ENCODE measurements at regions of chr5 and their contacts with region 1.

Region 1: GRCh38 chr5:180126726-180127681 is 55.4 kb upstream of the RNF130 start:
- DNase-seq: no peak
- ATAC-seq: peak; percentile 92
- H3K4me3 ChIP-seq: no peak overlapping the region
- H3K27ac ChIP-seq: no peak overlapping the region
- H3K4me1 ChIP-seq: peaks cover 0 to 9% of the 10 kb centered on the region in 2 experiments; a peak in 1 of 4 replicates
- H3K27me3 ChIP-seq: no peaks in the 10 kb centered on the region
- CTCF ChIP-seq: peak; percentile 81 to 84 (median 83)
- POLR2A ChIP-seq: no peak
- RAD21 ChIP-seq: peak; percentile 86

Region 2: DNA sequence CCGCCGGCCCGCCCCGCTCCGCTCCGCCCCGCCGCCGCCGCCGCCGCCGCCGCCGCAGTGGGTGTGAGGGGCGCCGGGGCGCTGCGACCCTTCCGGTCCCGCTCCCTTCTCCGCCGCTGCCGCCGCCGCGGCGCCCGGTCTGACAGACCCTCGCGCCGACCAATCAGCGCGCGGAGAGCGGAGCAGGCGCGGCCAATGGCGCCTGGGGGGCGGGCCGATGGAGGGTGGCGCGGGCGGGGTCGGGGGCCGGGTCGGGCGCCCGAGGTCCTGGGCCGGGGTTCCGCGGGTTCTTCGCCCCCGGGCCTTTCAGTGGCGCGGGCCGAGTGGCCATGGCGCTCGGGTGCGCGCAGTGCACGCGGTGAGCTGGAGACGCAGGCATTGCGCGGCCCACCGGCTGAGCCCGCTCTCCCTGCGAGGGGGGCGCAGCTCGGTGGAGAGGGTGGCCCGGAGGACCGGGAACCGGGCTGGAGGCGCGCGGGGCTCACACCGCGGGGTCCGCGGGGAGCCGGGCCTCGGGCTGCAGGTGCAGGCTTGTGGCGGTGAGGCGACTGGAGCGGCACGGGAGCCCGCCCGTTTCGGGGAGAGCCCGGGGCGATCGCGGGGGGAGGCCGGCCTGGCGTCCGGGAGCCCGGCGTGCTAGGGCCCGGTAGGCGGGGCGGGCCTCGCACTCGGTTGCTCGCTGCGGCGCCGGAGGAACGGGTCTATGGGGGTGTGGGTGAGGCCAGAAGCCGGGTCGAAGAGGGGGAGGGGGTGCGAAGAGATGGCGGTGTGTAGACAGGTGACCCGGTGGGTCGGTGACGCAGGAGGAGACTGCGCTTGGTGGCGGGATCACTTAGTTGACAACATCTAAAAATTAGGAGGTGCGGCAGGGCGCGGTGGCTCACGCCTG is 165.2 kb after region 1 on chr5 and contains the start of gene MAPK9:
- CTCF ChIA-PET with region 1: no interaction called
- POLR2A ChIA-PET with region 1: no interaction called
- RAD21 ChIA-PET with region 1: no interaction called
- intact Hi-C with region 1: loop called (anchors 10 kb)
- DNase-seq: peak; percentile 43
- ATAC-seq: peak; percentile 81
- H3K4me3 ChIP-seq: peak within 1 kb of the TSS; percentile 71 to 79
- H3K27ac ChIP-seq: peak within 1 kb of the TSS; percentile 93
- H3K4me1 ChIP-seq: peaks cover 10 to 24% of the 10 kb centered on the region in 2 experiments
- H3K27me3 ChIP-seq: no peaks in the 10 kb centered on the region
- CTCF ChIP-seq: no peak
- POLR2A ChIP-seq: peak; percentile 45
- RAD21 ChIP-seq: no peak
- total RNA-seq, gene MAPK9: 43.4 TPM

Region 3: DNA sequence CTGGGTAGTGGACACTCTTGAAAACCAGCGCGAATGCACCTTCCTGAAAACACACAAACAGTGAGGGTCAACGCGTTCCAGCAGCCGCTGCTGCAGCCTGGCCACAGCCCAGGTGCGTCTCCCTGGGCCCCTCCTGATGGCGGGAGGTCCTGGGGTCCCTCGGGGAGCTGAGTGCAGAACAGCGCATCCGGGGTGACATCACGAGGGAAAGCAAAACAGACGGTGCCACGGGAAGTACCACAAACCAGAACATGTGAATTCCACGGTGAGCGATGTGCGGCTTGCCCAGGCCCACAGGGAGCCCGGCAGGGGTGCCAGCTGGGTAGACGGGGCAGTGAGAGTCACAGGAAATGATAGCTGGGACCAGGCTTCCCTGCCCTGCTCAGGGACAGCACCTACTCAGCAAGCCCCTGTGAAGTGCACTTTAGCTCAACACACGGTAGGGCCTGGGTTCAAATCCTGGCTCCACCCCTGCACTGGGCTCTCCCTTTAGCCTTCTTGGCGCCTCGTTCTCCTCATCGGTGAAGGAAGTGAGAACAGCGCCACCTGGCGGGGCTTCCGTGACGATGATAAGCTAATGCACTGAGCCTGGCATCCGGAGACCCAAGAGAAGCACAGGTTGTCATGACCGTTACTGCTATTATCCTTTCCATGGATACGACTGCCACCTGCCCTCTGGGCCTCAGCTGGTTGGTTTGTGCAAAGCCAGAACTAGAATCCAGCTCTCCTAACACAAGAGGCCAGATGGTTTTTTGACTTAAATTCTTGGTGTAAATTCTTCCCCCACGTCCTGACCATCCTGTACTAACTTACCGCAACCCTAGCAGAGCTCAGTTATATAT is 201.5 kb after region 1 on chr5:
- CTCF ChIA-PET with region 1: interaction called, 5 read pairs
- POLR2A ChIA-PET with region 1: no interaction called
- RAD21 ChIA-PET with region 1: no interaction called
- intact Hi-C with region 1: loop called (anchors 2 kb)
- DNase-seq: peak; percentile 74
- ATAC-seq: peak; percentile 90
- H3K4me3 ChIP-seq: no peak overlapping the region
- H3K27ac ChIP-seq: no peak overlapping the region
- H3K4me1 ChIP-seq: peaks cover 33 to 45% of the 10 kb centered on the region in 2 experiments
- H3K27me3 ChIP-seq: no peaks in the 10 kb centered on the region
- CTCF ChIP-seq: peak; percentile 84 to 94 (median 90)
- POLR2A ChIP-seq: no peak
- RAD21 ChIP-seq: peak; percentile 73

Region 4: GRCh38 chr5:180605554-180606214 is 478.7 kb after region 1 on chr5:
- CTCF ChIA-PET with region 1: no interaction called
- POLR2A ChIA-PET with region 1: no interaction called
- RAD21 ChIA-PET with region 1: no interaction called
- intact Hi-C with region 1: loop called (anchors 5 kb)
- DNase-seq: peak; percentile 75
- ATAC-seq: peak; percentile 81
- H3K4me3 ChIP-seq: no peak overlapping the region
- H3K27ac ChIP-seq: no peak overlapping the region
- H3K4me1 ChIP-seq: 0 out of 4 replicates have a peak, but pooled peaks cover 0 to 3% of the 10 kb centered on the region in 2 experiments
- H3K27me3 ChIP-seq: no peaks in the 10 kb centered on the region
- CTCF ChIP-seq: peak; percentile 77 to 91 (median 85)
- POLR2A ChIP-seq: no peak
- RAD21 ChIP-seq: peak; percentile 73

Region 5: DNA sequence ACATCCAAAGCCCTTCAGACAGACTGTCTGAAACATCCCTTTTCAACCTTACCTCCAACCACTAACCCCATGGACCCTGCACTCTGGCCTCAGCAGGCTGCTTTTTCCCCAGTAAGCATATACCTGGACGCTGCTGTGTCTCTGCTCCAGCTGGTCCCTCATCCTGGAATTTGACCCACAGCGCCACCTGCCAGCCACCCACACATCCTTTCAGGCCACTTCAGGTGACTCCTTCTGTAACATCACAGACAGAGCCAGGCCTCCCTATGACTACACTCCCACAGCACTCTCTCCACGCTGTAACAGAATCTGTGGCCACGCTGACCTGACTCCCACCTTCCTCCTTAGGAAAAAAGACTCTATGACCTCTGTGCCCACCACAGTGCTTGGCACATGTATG is 672.2 kb after region 1 on chr5:
- CTCF ChIA-PET with region 1: no interaction called
- POLR2A ChIA-PET with region 1: no interaction called
- RAD21 ChIA-PET with region 1: no interaction called
- intact Hi-C with region 1: no loop called
- DNase-seq: no peak
- ATAC-seq: peak; percentile 26; the same call in 1 of the 2 replicates
- H3K4me3 ChIP-seq: no peak overlapping the region
- H3K27ac ChIP-seq: no peak overlapping the region
- H3K4me1 ChIP-seq: peaks cover 5 to 40% of the 10 kb centered on the region in 2 experiments; a peak in 3 of 4 replicates
- H3K27me3 ChIP-seq: no peaks in the 10 kb centered on the region
- CTCF ChIP-seq: peak in 2 of 3 experiments; percentile 52 to 54; a peak in 4 of 6 replicates
- POLR2A ChIP-seq: no peak
- RAD21 ChIP-seq: 0 out of 2 replicates have a peak, but pooled peaks have one; percentile 33